ENCODE measurements at regions of chr5 and their contacts with region 1.

Region 1: GRCh38 chr5:139633295-139634027 is 14.7 kb upstream of the CXXC5 start:
- DNase-seq: peak; percentile 78
- ATAC-seq: peak; percentile 40
- H3K4me3 Mint-ChIP-seq: no peak overlapping the region
- H3K27ac Mint-ChIP-seq: peak overlapping the region; percentile 29
- H3K4me1 Mint-ChIP-seq: peaks cover 52% of the 10 kb centered on the region
- H3K27me3 Mint-ChIP-seq: no peaks in the 10 kb centered on the region

Region 2: GRCh38 chr5:139574641-139575312 is 58.7 kb before region 1 on chr5:
- CTCF ChIA-PET with region 1: interaction called, 13 read pairs
- DNase-seq: no peak
- ATAC-seq: peak; percentile 43
- H3K4me3 Mint-ChIP-seq: no peak overlapping the region
- H3K27ac Mint-ChIP-seq: peak overlapping the region; percentile 55
- H3K4me1 Mint-ChIP-seq: peaks cover 72% of the 10 kb centered on the region
- H3K27me3 Mint-ChIP-seq: no peaks in the 10 kb centered on the region

Region 3: DNA sequence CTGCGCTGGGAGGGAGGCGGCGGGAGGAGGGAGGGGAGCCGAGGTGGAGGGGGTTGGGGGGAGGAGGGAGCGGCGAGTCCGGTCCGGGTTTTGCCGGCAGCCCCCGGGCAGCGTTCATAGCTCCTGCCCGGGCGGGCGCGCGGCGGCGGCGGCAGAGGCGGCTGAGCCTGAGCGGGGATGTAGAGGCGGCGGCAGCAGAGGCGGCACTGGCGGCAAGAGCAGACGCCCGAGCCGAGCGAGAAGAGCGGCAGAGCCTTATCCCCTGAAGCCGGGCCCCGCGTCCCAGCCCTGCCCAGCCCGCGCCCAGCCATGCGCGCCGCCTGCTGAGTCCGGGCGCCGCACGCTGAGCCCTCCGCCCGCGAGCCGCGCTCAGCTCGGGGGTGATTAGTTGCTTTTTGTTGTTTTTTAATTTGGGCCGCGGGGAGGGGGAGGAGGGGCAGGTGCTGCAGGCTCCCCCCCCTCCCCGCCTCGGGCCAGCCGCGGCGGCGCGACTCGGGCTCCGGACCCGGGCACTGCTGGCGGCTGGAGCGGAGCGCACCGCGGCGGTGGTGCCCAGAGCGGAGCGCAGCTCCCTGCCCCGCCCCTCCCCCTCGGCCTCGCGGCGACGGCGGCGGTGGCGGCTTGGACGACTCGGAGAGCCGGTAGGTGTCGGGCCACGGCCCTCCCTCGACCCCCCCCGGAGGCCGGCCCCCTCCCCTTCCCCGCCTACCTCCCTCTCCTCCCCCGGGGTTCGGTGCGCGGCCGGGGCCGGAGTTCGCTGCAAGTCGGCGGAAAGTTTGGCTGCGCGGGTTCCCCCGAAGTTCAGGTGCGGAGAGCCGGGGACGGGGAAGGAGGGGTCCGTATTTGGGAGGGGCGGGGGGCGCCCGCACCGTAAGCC is 15.0 kb after region 1 on chr5 and contains the start of gene CXXC5:
- CTCF ChIA-PET with region 1: interaction called, 109 read pairs
- DNase-seq: peak; percentile 66
- ATAC-seq: peak; percentile 59
- H3K4me3 Mint-ChIP-seq: peak within 1 kb of the TSS; percentile 57
- H3K27ac Mint-ChIP-seq: no peak within 1 kb of the TSS
- H3K4me1 Mint-ChIP-seq: peaks cover 54% of the 10 kb centered on the region
- H3K27me3 Mint-ChIP-seq: peaks cover 66% of the 10 kb centered on the region
- total RNA-seq, gene CXXC5: 1.8 to 4.1 TPM

Region 4: GRCh38 chr5:139684881-139685749 is 51.7 kb after region 1 on chr5:
- CTCF ChIA-PET with region 1: interaction called, 215 read pairs
- DNase-seq: no peak
- ATAC-seq: no peak
- H3K4me3 Mint-ChIP-seq: no peak overlapping the region
- H3K27ac Mint-ChIP-seq: no peak overlapping the region
- H3K4me1 Mint-ChIP-seq: peaks cover 2% of the 10 kb centered on the region
- H3K27me3 Mint-ChIP-seq: no peaks in the 10 kb centered on the region

Region 5: GRCh38 chr5:139711067-139711905 is 77.8 kb after region 1 on chr5:
- CTCF ChIA-PET with region 1: interaction called, 20 read pairs
- DNase-seq: peak; percentile 63
- ATAC-seq: peak; percentile 79
- H3K4me3 Mint-ChIP-seq: peak overlapping the region; percentile 40
- H3K27ac Mint-ChIP-seq: no peak overlapping the region
- H3K4me1 Mint-ChIP-seq: peaks cover 13% of the 10 kb centered on the region
- H3K27me3 Mint-ChIP-seq: peaks cover 25% of the 10 kb centered on the region

Region 6: GRCh38 chr5:139774980-139775661 is 141.7 kb after region 1 on chr5:
- CTCF ChIA-PET with region 1: interaction called, 12 read pairs
- DNase-seq: peak; percentile 85
- ATAC-seq: peak; percentile 95
- H3K4me3 Mint-ChIP-seq: no peak overlapping the region
- H3K27ac Mint-ChIP-seq: no peak overlapping the region
- H3K4me1 Mint-ChIP-seq: peaks cover 5% of the 10 kb centered on the region
- H3K27me3 Mint-ChIP-seq: peaks cover 13% of the 10 kb centered on the region

Measured in activated CD8-positive, alpha-beta memory T cell treated with anti-CD3 and anti-CD28 coated beads, Interleukin-2, amount 10 ng/mL, durations not matched to agents 7 days and 5 days (primary cell).